ENCODE measurements at regions of chr13 and their contacts with region 1.

Region 1: DNA sequence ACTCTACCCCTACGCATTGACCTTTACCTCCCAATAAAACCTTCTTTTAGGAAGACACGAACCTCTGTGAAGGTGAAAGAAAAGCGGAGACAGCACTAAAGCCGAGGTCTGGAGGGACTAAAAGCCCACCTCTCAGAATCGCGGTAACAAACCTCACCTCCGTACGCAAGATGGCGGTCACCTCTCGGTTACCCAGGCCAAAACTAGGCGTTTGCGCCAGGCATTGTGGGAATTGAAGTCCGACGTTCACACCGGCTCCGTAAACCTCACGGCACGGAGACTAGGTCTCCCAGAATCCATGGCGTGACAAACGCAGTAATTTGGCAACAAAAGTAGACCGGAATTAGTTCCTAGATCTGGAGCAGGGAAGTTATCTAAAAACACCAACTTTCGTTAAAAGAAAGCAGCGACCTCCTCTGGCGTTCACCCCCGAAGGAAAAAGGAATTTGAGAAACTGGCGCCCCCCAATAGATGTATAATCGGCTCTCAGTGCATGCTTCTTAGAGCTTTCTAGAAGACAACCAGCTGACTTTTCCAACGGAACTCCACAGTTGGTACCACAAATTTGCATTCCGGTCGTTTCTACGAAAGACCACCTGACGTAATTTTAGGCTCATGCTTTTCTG is at the start of gene N4BP2L2:
- DNase-seq: peak; percentile 82 to 97 (median 92)
- ATAC-seq: peak; percentile 95
- H3K4me3 ChIP-seq: peak within 1 kb of the TSS; percentile 78 to 91
- H3K4me3 Mint-ChIP-seq: peak within 1 kb of the TSS; percentile 99
- H3K27ac ChIP-seq: peak within 1 kb of the TSS; percentile 93 to 97
- H3K27ac Mint-ChIP-seq: peak within 1 kb of the TSS; percentile 100
- H3K4me1 ChIP-seq: peaks cover 37% of the 10 kb centered on the region
- H3K4me1 Mint-ChIP-seq: peaks cover 38% of the 10 kb centered on the region
- H3K27me3 ChIP-seq: no peaks in the 10 kb centered on the region
- H3K27me3 Mint-ChIP-seq: peaks cover 2% of the 10 kb centered on the region
- CTCF ChIP-seq: no peak
- total RNA-seq, gene N4BP2L2: 141 to 149 TPM

Region 2: DNA sequence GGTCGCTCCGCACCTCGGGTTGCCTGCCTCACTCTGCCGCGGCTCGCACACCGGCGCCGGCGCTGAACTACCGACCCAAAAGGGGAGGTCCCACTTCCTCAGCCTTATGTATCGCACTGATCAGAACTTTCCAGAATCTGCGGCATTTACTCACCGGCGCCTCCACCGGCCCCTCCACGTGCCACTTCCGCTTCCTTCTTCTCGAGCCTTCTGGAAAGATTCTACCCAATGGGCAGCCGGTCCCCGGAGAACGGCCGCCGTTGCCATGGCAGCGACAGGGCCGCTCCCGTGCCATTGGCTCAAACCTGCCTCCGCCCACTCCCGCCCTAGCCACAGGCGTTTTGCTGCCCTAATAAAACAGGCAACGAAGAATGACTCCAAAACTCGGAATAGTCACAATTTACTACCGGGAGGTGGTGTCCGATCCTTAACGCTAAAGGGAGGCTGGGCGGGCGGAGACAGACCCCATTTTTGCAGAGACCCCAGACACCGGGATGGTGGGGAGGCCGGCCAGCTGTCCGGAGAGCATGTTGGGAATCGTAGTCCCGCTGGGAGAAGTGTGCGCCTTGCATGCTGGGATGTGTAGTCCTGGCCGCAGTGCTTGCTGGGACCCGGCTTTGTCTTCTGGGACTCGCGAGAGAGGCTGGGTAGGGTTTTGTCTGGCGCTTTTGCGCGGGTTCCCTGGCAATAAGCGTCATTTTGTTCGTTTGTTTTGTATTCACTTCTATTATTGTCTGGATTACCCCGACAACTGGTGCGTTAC is 1376.7 kb before region 1 on chr13 and contains the start of gene HSPH1:
- CTCF ChIA-PET with region 1: no interaction called
- POLR2A ChIA-PET with region 1: no interaction called
- intact Hi-C with region 1: loop called in 1 of 2 experiments (anchors 10 kb)
- DNase-seq: peak; percentile 96 to 99 (median 98)
- ATAC-seq: peak; percentile 83
- H3K4me3 ChIP-seq: peak within 1 kb of the TSS; percentile 76 to 95
- H3K4me3 Mint-ChIP-seq: peak within 1 kb of the TSS; percentile 95
- H3K27ac ChIP-seq: peak within 1 kb of the TSS; percentile 98
- H3K27ac Mint-ChIP-seq: peak within 1 kb of the TSS; percentile 98
- H3K4me1 ChIP-seq: peaks cover 25% of the 10 kb centered on the region
- H3K4me1 Mint-ChIP-seq: peaks cover 43% of the 10 kb centered on the region
- H3K27me3 ChIP-seq: no peaks in the 10 kb centered on the region
- H3K27me3 Mint-ChIP-seq: no peaks in the 10 kb centered on the region
- CTCF ChIP-seq: no peak
- total RNA-seq, gene HSPH1: 189 to 199 TPM

Region 3: DNA sequence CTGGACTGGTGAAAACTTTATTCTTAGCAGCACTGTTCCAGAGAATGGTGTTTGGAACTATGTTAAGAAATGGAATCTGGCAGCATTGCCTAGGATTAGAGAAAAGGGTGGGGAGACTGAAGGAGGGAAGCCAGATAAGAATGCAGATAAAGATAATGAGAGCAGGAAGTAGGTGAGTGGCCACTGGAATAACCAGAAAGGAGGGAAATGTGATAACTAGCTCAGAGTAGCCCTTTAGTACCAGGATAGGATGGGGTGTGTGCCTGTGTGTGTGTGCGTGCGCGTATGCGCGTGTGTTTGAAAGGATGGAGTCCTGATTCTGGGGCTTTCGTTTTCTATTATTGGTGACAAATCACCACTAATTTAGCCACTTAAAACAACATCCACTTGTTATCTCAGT is 540.6 kb before region 1 on chr13:
- CTCF ChIA-PET with region 1: no interaction called
- POLR2A ChIA-PET with region 1: no interaction called
- intact Hi-C with region 1: no loop called
- DNase-seq: no peak
- ATAC-seq: no peak
- H3K4me3 ChIP-seq: no peak overlapping the region
- H3K4me3 Mint-ChIP-seq: no peak overlapping the region
- H3K27ac ChIP-seq: no peak overlapping the region
- H3K27ac Mint-ChIP-seq: no peak overlapping the region
- H3K4me1 ChIP-seq: no peaks in the 10 kb centered on the region
- H3K4me1 Mint-ChIP-seq: no peaks in the 10 kb centered on the region
- H3K27me3 ChIP-seq: no peaks in the 10 kb centered on the region
- H3K27me3 Mint-ChIP-seq: peaks cover 2% of the 10 kb centered on the region
- CTCF ChIP-seq: no peak

Region 4: DNA sequence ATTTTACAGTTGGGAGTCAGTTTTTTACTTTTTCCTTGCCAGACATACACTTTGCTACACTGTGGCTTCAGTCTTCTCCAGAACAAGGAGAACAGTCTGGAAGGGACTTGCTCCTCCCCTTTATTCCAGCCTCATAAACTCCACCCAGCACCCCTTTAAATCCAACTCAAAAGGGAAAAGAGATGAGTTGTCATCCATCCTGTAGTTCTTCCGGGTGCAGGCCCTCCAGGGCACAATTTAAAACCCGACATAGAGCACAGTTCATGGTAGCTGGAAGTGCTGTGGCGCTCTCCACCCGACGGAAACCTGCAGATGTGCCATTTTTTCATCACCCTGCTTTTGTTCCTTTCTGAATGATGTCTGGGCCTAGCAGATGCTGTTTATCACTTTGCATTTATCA is 322.4 kb before region 1 on chr13:
- CTCF ChIA-PET with region 1: no interaction called
- POLR2A ChIA-PET with region 1: no interaction called
- intact Hi-C with region 1: no loop called
- DNase-seq: no peak
- ATAC-seq: no peak
- H3K4me3 ChIP-seq: no peak overlapping the region
- H3K4me3 Mint-ChIP-seq: no peak overlapping the region
- H3K27ac ChIP-seq: no peak overlapping the region
- H3K27ac Mint-ChIP-seq: no peak overlapping the region
- H3K4me1 ChIP-seq: no peaks in the 10 kb centered on the region
- H3K4me1 Mint-ChIP-seq: no peaks in the 10 kb centered on the region
- H3K27me3 ChIP-seq: no peaks in the 10 kb centered on the region
- H3K27me3 Mint-ChIP-seq: no peaks in the 10 kb centered on the region
- CTCF ChIP-seq: no peak

Region 5: DNA sequence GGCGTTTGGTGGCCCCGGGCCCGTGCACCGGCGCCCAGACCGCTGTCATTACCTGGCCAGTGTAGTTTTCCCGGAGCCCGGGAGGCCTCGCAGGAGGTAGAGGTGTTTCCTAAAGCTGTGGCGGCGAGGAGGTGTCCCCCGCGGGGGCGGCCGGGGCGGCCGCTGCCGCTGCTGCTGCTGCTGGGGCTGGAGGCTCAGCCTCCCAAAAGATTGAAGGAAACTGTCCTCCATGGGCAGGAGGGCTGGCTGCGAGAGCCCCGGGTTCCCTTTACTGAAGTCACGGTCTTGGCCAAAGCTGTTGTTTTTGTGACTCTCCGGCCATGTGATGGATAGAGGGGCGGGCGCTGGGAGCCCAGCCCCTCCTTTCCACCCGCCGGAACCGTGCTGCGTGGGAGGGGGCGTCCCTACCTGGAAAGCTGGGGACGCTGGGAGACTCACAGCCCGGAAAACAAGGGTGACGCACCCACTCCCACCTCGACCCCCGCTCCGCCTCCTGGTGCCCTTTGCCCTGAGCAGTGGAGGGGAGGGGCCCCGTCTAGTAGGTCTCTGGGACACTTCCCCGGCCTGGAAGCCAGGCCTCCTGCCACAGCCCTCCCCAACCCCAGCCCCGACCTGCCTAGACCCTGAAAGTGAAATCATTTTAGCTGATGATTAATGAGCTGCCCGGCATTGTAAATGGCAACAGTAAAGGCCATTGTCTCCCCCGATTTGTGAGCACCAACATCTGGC is 110.7 kb before region 1 on chr13 and contains the start of gene N4BP2L1:
- CTCF ChIA-PET with region 1: no interaction called
- POLR2A ChIA-PET with region 1: interaction called, 26 read pairs
- intact Hi-C with region 1: loop called (anchors 1 to 2 kb)
- DNase-seq: peak; percentile 64 to 94 (median 80)
- ATAC-seq: peak; percentile 72
- H3K4me3 ChIP-seq: peak within 1 kb of the TSS; percentile 60 to 72
- H3K4me3 Mint-ChIP-seq: peak within 1 kb of the TSS; percentile 87
- H3K27ac ChIP-seq: peak within 1 kb of the TSS; percentile 85 to 98
- H3K27ac Mint-ChIP-seq: peak within 1 kb of the TSS; percentile 94
- H3K4me1 ChIP-seq: peaks cover 29% of the 10 kb centered on the region
- H3K4me1 Mint-ChIP-seq: peaks cover 39% of the 10 kb centered on the region
- H3K27me3 ChIP-seq: no peaks in the 10 kb centered on the region
- H3K27me3 Mint-ChIP-seq: no peaks in the 10 kb centered on the region
- CTCF ChIP-seq: no peak
- total RNA-seq, gene N4BP2L1: 53.2 to 54.1 TPM

Region 6: DNA sequence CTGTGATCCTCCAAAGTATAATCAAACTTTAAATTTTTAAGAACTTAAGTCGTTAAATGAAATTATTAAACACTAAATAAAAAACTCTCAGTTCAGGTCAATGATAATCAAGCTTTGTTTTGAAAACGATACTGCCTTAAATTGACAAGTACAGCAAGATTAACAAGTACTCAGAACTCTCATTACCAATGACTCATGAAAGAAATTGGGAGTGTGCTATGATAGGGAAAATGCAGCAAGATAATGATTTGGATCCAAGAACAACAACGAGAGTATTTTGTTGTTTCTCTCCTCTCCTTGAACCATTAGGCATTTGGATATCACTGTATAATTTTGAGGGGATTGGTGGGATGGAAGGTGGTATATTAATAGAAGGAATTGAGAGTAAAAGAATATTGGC is 10.4 kb before region 1 on chr13:
- CTCF ChIA-PET with region 1: no interaction called
- POLR2A ChIA-PET with region 1: interaction called, 6 read pairs
- intact Hi-C with region 1: loop called (anchors 2 kb)
- DNase-seq: no peak
- ATAC-seq: no peak
- H3K4me3 ChIP-seq: no peak overlapping the region
- H3K4me3 Mint-ChIP-seq: no peak overlapping the region
- H3K27ac ChIP-seq: no peak overlapping the region
- H3K27ac Mint-ChIP-seq: peak overlapping the region; percentile 61
- H3K4me1 ChIP-seq: peaks cover 46% of the 10 kb centered on the region
- H3K4me1 Mint-ChIP-seq: peaks cover 72% of the 10 kb centered on the region
- H3K27me3 ChIP-seq: no peaks in the 10 kb centered on the region
- H3K27me3 Mint-ChIP-seq: no peaks in the 10 kb centered on the region
- CTCF ChIP-seq: no peak

Region 7: GRCh38 chr13:32555613-32556012 is 16.9 kb after region 1 on chr13:
- CTCF ChIA-PET with region 1: no interaction called
- POLR2A ChIA-PET with region 1: no interaction called
- intact Hi-C with region 1: no loop called
- DNase-seq: no peak
- ATAC-seq: no peak
- H3K4me3 ChIP-seq: no peak overlapping the region
- H3K4me3 Mint-ChIP-seq: no peak overlapping the region
- H3K27ac ChIP-seq: no peak overlapping the region
- H3K27ac Mint-ChIP-seq: no peak overlapping the region
- H3K4me1 ChIP-seq: no peaks in the 10 kb centered on the region
- H3K4me1 Mint-ChIP-seq: no peaks in the 10 kb centered on the region
- H3K27me3 ChIP-seq: no peaks in the 10 kb centered on the region
- H3K27me3 Mint-ChIP-seq: peaks cover 4% of the 10 kb centered on the region
- CTCF ChIP-seq: no peak

Region 8: GRCh38 chr13:32737111-32737571 is 198.4 kb after region 1 on chr13:
- CTCF ChIA-PET with region 1: no interaction called
- POLR2A ChIA-PET with region 1: no interaction called
- intact Hi-C with region 1: loop called in 1 of 2 experiments (anchors 5 kb)
- DNase-seq: peak in 2 of 9 experiments; percentile 43 to 70
- ATAC-seq: peak; percentile 79
- H3K4me3 ChIP-seq: peak overlapping the region; percentile 41 to 48
- H3K4me3 Mint-ChIP-seq: peak overlapping the region; percentile 76
- H3K27ac ChIP-seq: peak overlapping the region; percentile 76 to 91
- H3K27ac Mint-ChIP-seq: peak overlapping the region; percentile 92
- H3K4me1 ChIP-seq: peaks cover 14% of the 10 kb centered on the region
- H3K4me1 Mint-ChIP-seq: peaks cover 30% of the 10 kb centered on the region
- H3K27me3 ChIP-seq: no peaks in the 10 kb centered on the region
- H3K27me3 Mint-ChIP-seq: no peaks in the 10 kb centered on the region
- CTCF ChIP-seq: no peak

Region 9: GRCh38 chr13:33004511-33004910 is 465.8 kb after region 1 on chr13:
- CTCF ChIA-PET with region 1: no interaction called
- POLR2A ChIA-PET with region 1: no interaction called
- intact Hi-C with region 1: no loop called
- DNase-seq: no peak
- ATAC-seq: no peak
- H3K4me3 ChIP-seq: no peak overlapping the region
- H3K4me3 Mint-ChIP-seq: no peak overlapping the region
- H3K27ac ChIP-seq: no peak overlapping the region
- H3K27ac Mint-ChIP-seq: no peak overlapping the region
- H3K4me1 ChIP-seq: no peaks in the 10 kb centered on the region
- H3K4me1 Mint-ChIP-seq: no peaks in the 10 kb centered on the region
- H3K27me3 ChIP-seq: no peaks in the 10 kb centered on the region
- H3K27me3 Mint-ChIP-seq: peaks cover 12% of the 10 kb centered on the region
- CTCF ChIP-seq: no peak

Measured in CD8-positive, alpha-beta T cell (primary cell).